ENCODE measurements at regions of chr1 and their contacts with region 1.

Region 1: DNA sequence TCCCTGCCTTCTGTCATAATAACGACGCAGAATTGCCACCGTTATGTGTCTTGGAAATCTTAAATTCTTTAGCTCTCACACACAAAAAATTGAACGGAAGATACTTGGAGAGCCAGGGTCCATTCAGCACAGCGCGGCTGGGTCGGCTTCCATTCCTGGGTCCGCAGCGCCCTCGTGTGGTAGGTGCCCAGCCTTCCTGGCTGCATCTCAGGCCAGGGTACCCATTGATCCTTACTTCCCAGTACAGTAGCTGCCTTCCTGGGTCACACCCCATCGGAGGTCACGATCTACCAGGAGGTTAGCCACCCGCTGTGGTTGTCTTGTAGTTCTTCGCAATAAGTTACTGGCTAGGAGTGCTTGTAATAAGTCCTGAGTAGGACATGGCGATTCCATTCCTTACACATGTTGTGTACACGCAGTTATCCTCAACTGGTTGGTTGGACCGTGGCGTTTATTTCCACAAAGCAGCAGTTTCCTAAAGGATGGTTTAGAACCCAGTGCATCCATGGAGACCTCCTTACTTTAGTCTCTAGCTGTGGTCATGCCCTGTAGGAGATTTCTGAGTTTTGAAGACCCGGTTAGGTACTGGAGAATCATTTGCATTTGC is 9.9 kb upstream of the MTARC1 start:
- DNase-seq: peak; percentile 7
- H3K4me3 ChIP-seq: no peak overlapping the region
- CTCF ChIP-seq: peak; percentile 95

Region 2: DNA sequence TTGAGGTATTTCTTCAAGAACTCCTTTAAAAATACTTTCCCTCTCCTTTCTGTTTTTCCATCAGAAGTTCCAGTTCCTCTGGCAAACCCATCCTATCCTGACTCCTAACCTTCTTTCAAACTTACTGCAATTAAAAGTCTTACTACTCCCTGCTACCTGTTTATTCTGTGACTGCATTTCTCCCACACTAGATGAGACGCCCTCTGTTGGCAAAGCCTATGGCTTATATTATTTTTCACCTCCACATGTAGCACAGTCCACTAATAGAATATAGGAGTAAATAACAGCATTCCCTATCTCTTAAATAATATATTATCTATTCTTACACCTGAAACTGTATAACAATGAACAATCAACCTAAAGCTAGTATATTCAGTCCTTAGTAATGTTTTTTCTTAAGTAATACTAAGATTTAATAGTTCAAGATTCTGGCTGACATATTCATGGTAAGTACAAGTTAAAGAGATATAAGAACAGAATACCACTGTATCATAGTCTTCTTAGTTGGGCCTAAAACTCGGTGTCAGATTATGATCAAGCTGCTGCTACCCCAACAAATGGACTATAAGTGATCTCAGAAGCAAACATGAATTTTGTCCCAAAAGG is 559.3 kb before region 1 on chr1:
- CTCF ChIA-PET with region 1: interaction called, 20 read pairs
- POLR2A ChIA-PET with region 1: no interaction called
- DNase-seq: no peak
- H3K4me3 ChIP-seq: no peak overlapping the region
- CTCF ChIP-seq: no peak

Region 3: DNA sequence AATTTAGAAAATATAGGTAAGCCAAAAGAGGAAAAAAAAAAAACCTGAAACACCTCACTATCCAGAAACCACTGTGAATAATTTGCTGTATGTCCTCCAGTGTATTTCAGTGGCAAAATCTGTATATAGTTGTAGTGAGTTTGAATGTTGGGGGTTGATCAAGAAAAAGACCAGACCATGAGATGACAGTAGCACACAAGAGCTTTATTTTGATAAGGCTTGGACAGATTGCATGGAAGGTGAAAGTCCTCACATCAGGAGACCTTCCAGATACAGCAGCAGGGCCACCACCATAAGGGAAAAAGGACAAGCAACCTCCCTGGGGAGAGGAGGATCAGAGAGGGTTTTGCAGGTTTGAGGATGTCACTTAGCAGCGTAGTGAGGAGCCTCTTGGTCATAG is 102.9 kb before region 1 on chr1:
- CTCF ChIA-PET with region 1: interaction called, 64 read pairs
- POLR2A ChIA-PET with region 1: no interaction called
- DNase-seq: no peak
- H3K4me3 ChIP-seq: no peak overlapping the region
- CTCF ChIP-seq: no peak

Region 4: GRCh38 chr1:220692436-220693187 is 84.2 kb before region 1 on chr1:
- CTCF ChIA-PET with region 1: interaction called, 11 read pairs
- POLR2A ChIA-PET with region 1: no interaction called
- DNase-seq: peak; percentile 16
- H3K4me3 ChIP-seq: no peak overlapping the region
- CTCF ChIP-seq: no peak

Region 5: GRCh38 chr1:220761688-220762427 is 15.0 kb before region 1 on chr1:
- CTCF ChIA-PET with region 1: interaction called, 59 read pairs
- POLR2A ChIA-PET with region 1: no interaction called
- DNase-seq: no peak
- H3K4me3 ChIP-seq: no peak overlapping the region
- CTCF ChIP-seq: no peak

Measured in AG04449 (cell line).